Activated CD4-positive, alpha-beta T cell treated with anti-CD3 and anti-CD28 coated beads for 36 hours (primary cell): ENCODE measurements at regions of chr9 and their contacts with region 1.

Region 1: GRCh38 chr9:120477521-120478001 is 102.4 kb downstream of the CDK5RAP2 start:
- DNase-seq: peak; percentile 58
- ATAC-seq: peak; percentile 75
- H3K4me3 Mint-ChIP-seq: no peak overlapping the region
- H3K27ac Mint-ChIP-seq: no peak overlapping the region
- H3K4me1 Mint-ChIP-seq: no peaks in the 10 kb centered on the region
- H3K27me3 Mint-ChIP-seq: no peaks in the 10 kb centered on the region

Region 2: GRCh38 chr9:119961774-119962424 is 515.7 kb before region 1 on chr9:
- CTCF ChIA-PET with region 1: no interaction called
- POLR2A ChIA-PET with region 1: no interaction called
- intact Hi-C with region 1: loop called in 1 of 2 experiments (anchors 5 kb)
- DNase-seq: peak; percentile 39
- ATAC-seq: no peak
- H3K4me3 Mint-ChIP-seq: no peak overlapping the region
- H3K27ac Mint-ChIP-seq: no peak overlapping the region
- H3K4me1 Mint-ChIP-seq: no peaks in the 10 kb centered on the region
- H3K27me3 Mint-ChIP-seq: peaks cover 20% of the 10 kb centered on the region